Breast epithelium (tissue), 4 donors: ENCODE measurements at regions of chr6 and their contacts with region 1.

Region 1: DNA sequence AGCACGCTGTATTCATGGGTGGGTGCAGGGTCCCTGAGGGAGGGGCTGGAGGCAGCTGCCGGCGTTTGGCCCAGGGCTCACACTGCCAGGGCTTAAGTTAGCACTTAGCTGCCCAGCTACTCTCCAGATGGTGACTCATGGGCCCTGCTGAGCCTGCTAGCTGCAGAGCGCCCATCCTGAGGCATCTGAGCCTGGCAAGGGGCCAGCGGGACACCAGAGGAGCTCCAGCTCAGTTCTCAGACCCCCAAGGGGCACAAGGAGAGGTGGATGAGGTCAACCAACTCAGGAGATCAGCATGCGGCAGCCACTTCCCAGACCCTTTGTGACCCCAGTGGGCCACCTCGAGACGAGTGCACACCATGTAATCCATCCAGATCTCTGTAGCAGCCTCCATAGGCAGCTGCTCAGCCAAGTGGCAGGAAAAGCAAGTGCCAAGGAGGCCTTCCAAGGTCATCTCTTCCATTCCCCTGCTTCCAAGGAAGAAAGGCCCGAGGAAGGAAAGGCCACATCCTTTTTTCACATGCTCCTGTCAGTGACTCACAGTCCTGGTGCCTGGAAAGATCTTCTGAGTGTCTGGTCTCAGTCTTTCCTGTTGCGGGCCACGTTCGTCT is 35.3 kb downstream of the FOXP4 start:
- DNase-seq: no peak
- H3K4me3 ChIP-seq: no peak overlapping the region
- H3K27ac ChIP-seq: peak overlapping the region; percentile 50 to 68
- H3K4me1 ChIP-seq: peaks cover 4 to 14% of the 10 kb centered on the region in 2 donors
- H3K27me3 ChIP-seq: no peaks in the 10 kb centered on the region
- CTCF ChIP-seq: no peak
- POLR2A ChIP-seq: no peak

Region 2: DNA sequence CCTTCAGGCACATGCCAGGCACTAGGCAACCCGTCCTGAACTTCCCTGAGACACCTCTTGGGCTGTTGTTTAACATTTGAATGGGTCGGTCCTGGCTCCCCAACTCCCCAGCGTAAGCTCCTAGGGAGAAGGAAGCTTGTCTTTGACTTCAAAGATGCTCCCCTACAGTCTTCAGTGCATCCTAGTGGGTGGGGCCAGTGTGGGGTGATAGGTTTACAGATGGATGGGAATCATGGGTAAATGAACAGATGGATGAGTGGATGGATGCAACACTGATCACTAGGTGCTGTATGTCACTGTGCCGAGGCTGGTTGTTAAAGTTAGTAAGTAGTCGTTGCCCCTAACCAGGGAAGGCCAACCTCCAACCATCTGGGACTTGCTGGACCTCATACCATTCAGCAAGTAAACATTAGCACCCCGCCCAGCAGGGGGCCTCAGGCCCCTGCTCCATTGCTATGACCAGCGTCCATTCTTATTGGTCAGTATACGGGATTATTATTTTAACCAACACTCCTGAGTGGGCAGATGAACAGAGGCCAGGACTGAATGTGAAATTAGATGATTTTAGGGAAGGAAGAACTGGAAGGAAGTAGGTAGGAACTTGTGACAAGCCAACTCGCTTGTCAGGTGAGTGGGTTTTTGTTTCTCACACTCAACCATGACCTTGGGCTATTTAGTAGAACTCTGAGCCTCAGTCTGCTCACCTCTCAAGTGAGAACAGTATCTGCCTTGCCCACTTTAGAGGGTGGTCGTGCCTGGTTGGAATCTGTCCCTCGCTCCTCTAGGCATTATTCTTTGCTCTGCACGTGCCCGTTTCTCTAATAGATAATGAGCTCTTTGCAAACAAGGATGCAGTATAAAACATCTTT is 118.2 kb before region 1 on chr6:
- intact Hi-C with region 1: loop called (anchors 10 kb)
- DNase-seq: peak in 1 of 2 donors; percentile 71
- H3K4me3 ChIP-seq: no peak overlapping the region
- H3K27ac ChIP-seq: no peak overlapping the region
- H3K4me1 ChIP-seq: no peaks in the 10 kb centered on the region
- H3K27me3 ChIP-seq: no peaks in the 10 kb centered on the region
- CTCF ChIP-seq: peak; percentile 55 to 71 (median 57)
- POLR2A ChIP-seq: no peak

Region 3: DNA sequence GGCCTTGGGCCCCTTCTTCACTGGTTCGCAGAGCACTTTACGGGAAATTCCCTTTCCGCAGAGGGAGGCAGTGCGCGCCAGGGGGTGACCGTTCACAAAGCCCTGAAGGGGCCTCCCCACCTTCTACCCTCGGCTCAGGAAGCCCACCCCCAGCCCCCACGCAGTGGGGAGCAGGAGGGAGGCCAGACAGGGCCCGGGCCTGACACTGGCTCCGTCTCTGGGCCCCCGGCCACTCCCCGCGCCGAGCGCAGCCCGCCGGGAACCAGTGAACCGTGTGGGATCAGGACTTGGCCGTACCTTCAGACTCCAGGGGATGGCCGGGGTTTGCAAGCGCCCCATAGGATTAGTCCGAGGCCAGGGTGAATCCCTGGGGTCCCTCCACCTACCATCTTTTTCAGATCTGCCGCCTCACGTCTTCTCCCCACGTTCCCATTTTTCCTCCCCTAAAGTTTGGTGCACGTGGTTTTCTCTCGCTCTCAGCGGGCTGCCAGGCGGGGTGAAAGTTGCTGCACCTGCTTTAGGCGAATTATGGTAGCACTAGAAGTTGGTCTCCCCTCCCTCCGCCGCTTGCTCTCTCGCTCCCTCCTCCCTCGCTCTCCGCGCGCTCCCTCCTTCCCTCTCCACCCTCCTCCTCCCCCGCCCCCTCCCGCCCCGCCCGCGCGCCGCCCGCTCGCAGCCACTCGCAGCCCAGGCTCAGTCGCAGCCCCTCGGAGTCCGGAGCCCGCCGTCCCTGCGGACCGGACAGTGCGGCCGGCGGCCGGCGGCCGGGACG is 35.6 kb before region 1 on chr6 and contains the start of gene FOXP4:
- intact Hi-C with region 1: loop called (anchors 1 kb)
- DNase-seq: peak; percentile 85 to 86
- H3K4me3 ChIP-seq: peak within 1 kb of the TSS; percentile 81 to 100 (median 89)
- H3K27ac ChIP-seq: peak within 1 kb of the TSS; percentile 82 to 95
- H3K4me1 ChIP-seq: peaks cover 5 to 6% of the 10 kb centered on the region in 2 donors
- H3K27me3 ChIP-seq: no peaks in the 10 kb centered on the region
- CTCF ChIP-seq: no peak
- POLR2A ChIP-seq: no peak
- total RNA-seq, gene FOXP4: 5.1 to 11.0 (median 5.6) TPM